CD4-positive, alpha-beta T cell (primary cell): ENCODE measurements at regions of chr1 and their contacts with region 1.

Region 1: DNA sequence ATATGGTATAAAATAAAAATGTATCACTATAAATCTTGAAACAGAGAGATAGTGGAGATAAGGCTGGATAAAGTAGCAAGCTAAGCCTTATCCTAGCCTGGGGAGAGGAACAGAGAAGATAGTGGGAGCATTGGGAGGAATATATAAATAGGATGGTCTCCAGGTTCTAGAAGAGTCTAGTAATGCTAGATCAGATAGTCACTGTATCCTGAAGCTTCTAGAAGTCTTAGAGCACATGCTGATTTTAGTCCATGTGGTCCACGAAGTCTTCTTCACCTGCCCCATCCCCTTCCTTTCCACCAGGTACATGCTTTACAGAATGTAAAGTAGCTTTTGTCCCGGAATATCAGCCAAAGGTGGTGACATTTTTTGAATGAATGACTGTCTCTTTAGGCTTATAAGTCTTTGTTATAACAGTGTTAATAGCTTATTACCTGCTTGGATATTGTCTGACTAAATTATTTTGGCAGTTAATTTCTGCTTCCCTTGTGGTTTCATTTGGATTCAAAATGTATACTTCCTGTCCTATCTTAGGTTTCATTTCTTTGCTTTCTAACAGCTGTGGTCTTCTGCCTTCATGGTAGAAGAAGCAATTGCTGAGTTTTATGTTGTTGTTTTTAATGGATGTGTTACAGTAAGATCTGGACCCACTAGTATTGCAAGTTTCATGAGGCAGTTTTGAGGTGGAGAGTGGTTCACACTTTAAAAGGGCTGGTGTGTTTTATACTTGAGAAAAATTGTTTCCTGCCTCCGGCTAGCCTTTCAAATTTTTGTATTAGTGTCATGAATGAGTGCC is 5.9 kb downstream of the SMG7 start:
- DNase-seq: peak in 1 of 14 experiments; percentile 27
- ATAC-seq: peak; percentile 37
- H3K4me3 ChIP-seq: no peak overlapping the region
- H3K4me3 Mint-ChIP-seq: peak overlapping the region; percentile 13
- H3K27ac ChIP-seq: no peak overlapping the region
- H3K27ac Mint-ChIP-seq: peak overlapping the region; percentile 26
- H3K4me1 ChIP-seq: peaks cover 25% of the 10 kb centered on the region
- H3K4me1 Mint-ChIP-seq: peaks cover 66% of the 10 kb centered on the region
- H3K27me3 ChIP-seq: no peaks in the 10 kb centered on the region
- H3K27me3 Mint-ChIP-seq: no peaks in the 10 kb centered on the region
- CTCF ChIP-seq: no peak

Region 2: GRCh38 chr1:183461350-183461749 is 16.8 kb before region 1 on chr1:
- CTCF ChIA-PET with region 1: no interaction called
- POLR2A ChIA-PET with region 1: no interaction called
- intact Hi-C with region 1: no loop called
- DNase-seq: peak in 2 of 14 experiments; percentile 49 to 54
- ATAC-seq: no peak
- H3K4me3 ChIP-seq: no peak overlapping the region
- H3K4me3 Mint-ChIP-seq: no peak overlapping the region
- H3K27ac ChIP-seq: no peak overlapping the region
- H3K27ac Mint-ChIP-seq: no peak overlapping the region
- H3K4me1 ChIP-seq: no peaks in the 10 kb centered on the region
- H3K4me1 Mint-ChIP-seq: no peaks in the 10 kb centered on the region
- H3K27me3 ChIP-seq: peaks cover 3 to 21% of the 10 kb centered on the region in 2 experiments
- H3K27me3 Mint-ChIP-seq: peaks cover 58% of the 10 kb centered on the region
- CTCF ChIP-seq: no peak

Region 3: GRCh38 chr1:183515018-183515689 is 37.0 kb after region 1 on chr1:
- CTCF ChIA-PET with region 1: no interaction called
- POLR2A ChIA-PET with region 1: interaction called, 3 read pairs
- intact Hi-C with region 1: loop called in 1 of 2 experiments (anchors 5 kb)
- DNase-seq: no peak
- ATAC-seq: no peak
- H3K4me3 ChIP-seq: no peak overlapping the region
- H3K4me3 Mint-ChIP-seq: no peak overlapping the region
- H3K27ac ChIP-seq: no peak overlapping the region
- H3K27ac Mint-ChIP-seq: peak overlapping the region; percentile 12
- H3K4me1 ChIP-seq: no peaks in the 10 kb centered on the region
- H3K4me1 Mint-ChIP-seq: peaks cover 24% of the 10 kb centered on the region
- H3K27me3 ChIP-seq: no peaks in the 10 kb centered on the region
- H3K27me3 Mint-ChIP-seq: no peaks in the 10 kb centered on the region
- CTCF ChIP-seq: no peak